Natural killer cell (primary cell): ENCODE measurements at regions of chr12 and their contacts with region 1.

Region 1: DNA sequence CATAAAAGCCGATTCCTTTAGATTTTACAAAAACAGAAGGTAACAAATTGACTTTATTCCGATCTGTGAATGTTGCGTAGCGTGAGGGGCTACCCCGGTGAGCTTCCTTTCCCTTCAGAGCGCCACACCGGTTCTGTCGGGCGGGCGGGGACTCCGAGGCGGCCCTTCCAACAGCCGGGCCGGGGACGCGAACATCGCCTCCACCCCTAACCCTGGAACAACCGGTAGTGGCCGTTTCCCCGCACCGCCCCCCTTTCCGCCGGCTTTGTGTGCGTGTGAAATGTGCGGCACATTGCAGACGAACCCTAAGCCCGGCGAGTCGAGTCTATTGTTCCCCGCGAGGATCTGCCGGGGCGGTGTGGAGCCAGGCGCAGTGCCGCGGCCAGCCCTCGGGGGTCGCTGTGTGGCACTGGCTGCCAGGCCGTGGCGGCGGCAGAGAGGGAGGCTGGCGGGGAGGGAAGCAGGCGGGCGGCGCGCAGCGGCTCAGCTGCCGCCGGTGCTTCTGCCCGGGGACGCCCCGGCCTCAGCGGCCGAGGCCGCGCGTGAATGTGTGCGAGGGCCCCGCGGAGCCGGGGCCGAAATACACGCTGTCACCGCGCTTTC is 775 bp upstream of the ARID2 start:
- DNase-seq: peak; percentile 96 to 98
- ATAC-seq: peak; percentile 67 to 89 (median 72)
- H3K4me3 ChIP-seq: peak overlapping the region; percentile 88
- H3K4me3 Mint-ChIP-seq: peak overlapping the region; percentile 100
- H3K27ac ChIP-seq: peak overlapping the region; percentile 96
- H3K27ac Mint-ChIP-seq: peak overlapping the region; percentile 100
- H3K4me1 ChIP-seq: peaks cover 10% of the 10 kb centered on the region
- H3K4me1 Mint-ChIP-seq: peaks cover 50 to 61% of the 10 kb centered on the region in 2 donors
- H3K27me3 ChIP-seq: no peaks in the 10 kb centered on the region
- H3K27me3 Mint-ChIP-seq: no peaks in the 10 kb centered on the region
- CTCF ChIP-seq: peak; percentile 88

Region 2: GRCh38 chr12:45215419-45216229 is 513.1 kb before region 1 on chr12 and contains the start of gene ANO6:
- intact Hi-C with region 1: loop called (anchors 5 kb)
- DNase-seq: peak; percentile 59 to 88
- ATAC-seq: peak; percentile 68 to 84 (median 73)
- H3K4me3 ChIP-seq: peak within 1 kb of the TSS; percentile 90
- H3K4me3 Mint-ChIP-seq: peak within 1 kb of the TSS; percentile 93
- H3K27ac ChIP-seq: peak within 1 kb of the TSS; percentile 66
- H3K27ac Mint-ChIP-seq: peak within 1 kb of the TSS; percentile 72 to 87
- H3K4me1 ChIP-seq: peaks cover 10% of the 10 kb centered on the region
- H3K4me1 Mint-ChIP-seq: peaks cover 62 to 66% of the 10 kb centered on the region in 2 donors
- H3K27me3 ChIP-seq: no peaks in the 10 kb centered on the region
- H3K27me3 Mint-ChIP-seq: no peaks in the 10 kb centered on the region
- CTCF ChIP-seq: no peak
- total RNA-seq, gene ANO6: 26.6 to 31.0 (median 30.4) TPM

Region 3: GRCh38 chr12:45655201-45655600 is 73.5 kb before region 1 on chr12:
- intact Hi-C with region 1: loop called (anchors 1 kb)
- DNase-seq: peak; percentile 27 to 85
- ATAC-seq: peak; percentile 97 to 100 (median 100)
- H3K4me3 ChIP-seq: no peak overlapping the region
- H3K4me3 Mint-ChIP-seq: no peak overlapping the region
- H3K27ac ChIP-seq: no peak overlapping the region
- H3K27ac Mint-ChIP-seq: peak overlapping the region in 1 of 2 donors; percentile 51
- H3K4me1 ChIP-seq: no peaks in the 10 kb centered on the region
- H3K4me1 Mint-ChIP-seq: peaks cover 0 to 14% of the 10 kb centered on the region in 2 donors
- H3K27me3 ChIP-seq: no peaks in the 10 kb centered on the region
- H3K27me3 Mint-ChIP-seq: peaks cover 6 to 9% of the 10 kb centered on the region in 2 donors
- CTCF ChIP-seq: peak; percentile 37

Region 4: GRCh38 chr12:45816652-45817051 is 87.9 kb after region 1 on chr12:
- intact Hi-C with region 1: no loop called
- DNase-seq: no peak
- ATAC-seq: no peak
- H3K4me3 ChIP-seq: no peak overlapping the region
- H3K4me3 Mint-ChIP-seq: no peak overlapping the region
- H3K27ac ChIP-seq: no peak overlapping the region
- H3K27ac Mint-ChIP-seq: no peak overlapping the region
- H3K4me1 ChIP-seq: no peaks in the 10 kb centered on the region
- H3K4me1 Mint-ChIP-seq: peaks cover 11 to 18% of the 10 kb centered on the region in 2 donors
- H3K27me3 ChIP-seq: no peaks in the 10 kb centered on the region
- H3K27me3 Mint-ChIP-seq: no peaks in the 10 kb centered on the region
- CTCF ChIP-seq: no peak

Region 5: GRCh38 chr12:45878630-45879255 is 150.0 kb after region 1 on chr12:
- intact Hi-C with region 1: loop called (anchors 2 kb)
- DNase-seq: peak; percentile 37 to 53
- ATAC-seq: peak; percentile 74 to 80 (median 80)
- H3K4me3 ChIP-seq: no peak overlapping the region
- H3K4me3 Mint-ChIP-seq: peak overlapping the region; percentile 81
- H3K27ac ChIP-seq: peak overlapping the region; percentile 83
- H3K27ac Mint-ChIP-seq: peak overlapping the region; percentile 78 to 95
- H3K4me1 ChIP-seq: peaks cover 11% of the 10 kb centered on the region
- H3K4me1 Mint-ChIP-seq: peaks cover 59 to 66% of the 10 kb centered on the region in 2 donors
- H3K27me3 ChIP-seq: no peaks in the 10 kb centered on the region
- H3K27me3 Mint-ChIP-seq: no peaks in the 10 kb centered on the region
- CTCF ChIP-seq: no peak

Region 6: DNA sequence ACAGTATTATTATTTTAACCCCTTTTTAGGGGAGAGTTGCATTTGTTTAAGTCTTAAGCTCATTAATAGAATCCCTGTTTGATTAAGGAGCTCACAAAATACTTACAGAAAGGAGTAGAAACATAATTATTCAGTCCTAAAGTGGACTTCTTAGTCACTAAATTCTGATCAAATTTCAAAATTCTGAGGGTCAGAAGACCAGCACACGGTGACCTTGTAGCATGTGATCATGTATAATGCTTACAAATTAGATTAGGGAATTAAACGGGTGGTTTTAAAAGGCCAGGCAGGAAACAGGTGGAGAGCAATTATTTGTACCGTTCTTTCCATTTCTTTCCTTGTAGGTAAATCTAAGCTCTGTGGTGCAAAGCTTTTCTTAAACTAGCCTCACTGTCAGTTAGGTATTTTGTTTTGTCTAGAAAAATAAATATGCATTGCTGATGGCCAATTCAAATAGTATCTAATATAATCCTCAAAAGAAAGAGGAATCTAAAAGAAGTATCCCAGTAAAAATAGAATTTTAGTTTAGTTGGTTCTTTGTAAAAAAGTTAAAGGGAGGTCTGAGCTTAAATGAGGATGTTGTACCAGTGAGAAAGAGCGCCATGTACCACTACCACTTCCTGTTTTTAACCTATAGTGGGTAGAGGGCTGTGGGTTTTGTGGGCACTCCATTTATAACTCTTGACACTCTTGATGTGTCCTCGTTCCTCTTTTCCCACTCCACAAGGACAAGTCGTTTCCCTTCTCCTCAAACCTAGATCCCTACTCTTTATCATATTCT is 489.0 kb after region 1 on chr12:
- intact Hi-C with region 1: loop called (anchors 5 kb)
- DNase-seq: peak; percentile 57 to 85
- ATAC-seq: peak; percentile 11 to 55 (median 32)
- H3K4me3 ChIP-seq: peak overlapping the region; percentile 8
- H3K4me3 Mint-ChIP-seq: peak overlapping the region; percentile 85
- H3K27ac ChIP-seq: peak overlapping the region; percentile 87
- H3K27ac Mint-ChIP-seq: peak overlapping the region; percentile 97 to 98
- H3K4me1 ChIP-seq: peaks cover 54% of the 10 kb centered on the region
- H3K4me1 Mint-ChIP-seq: peaks cover 90 to 97% of the 10 kb centered on the region in 2 donors
- H3K27me3 ChIP-seq: no peaks in the 10 kb centered on the region
- H3K27me3 Mint-ChIP-seq: no peaks in the 10 kb centered on the region
- CTCF ChIP-seq: no peak